ENCODE measurements at regions of chr16 and their contacts with region 1.

Region 1: DNA sequence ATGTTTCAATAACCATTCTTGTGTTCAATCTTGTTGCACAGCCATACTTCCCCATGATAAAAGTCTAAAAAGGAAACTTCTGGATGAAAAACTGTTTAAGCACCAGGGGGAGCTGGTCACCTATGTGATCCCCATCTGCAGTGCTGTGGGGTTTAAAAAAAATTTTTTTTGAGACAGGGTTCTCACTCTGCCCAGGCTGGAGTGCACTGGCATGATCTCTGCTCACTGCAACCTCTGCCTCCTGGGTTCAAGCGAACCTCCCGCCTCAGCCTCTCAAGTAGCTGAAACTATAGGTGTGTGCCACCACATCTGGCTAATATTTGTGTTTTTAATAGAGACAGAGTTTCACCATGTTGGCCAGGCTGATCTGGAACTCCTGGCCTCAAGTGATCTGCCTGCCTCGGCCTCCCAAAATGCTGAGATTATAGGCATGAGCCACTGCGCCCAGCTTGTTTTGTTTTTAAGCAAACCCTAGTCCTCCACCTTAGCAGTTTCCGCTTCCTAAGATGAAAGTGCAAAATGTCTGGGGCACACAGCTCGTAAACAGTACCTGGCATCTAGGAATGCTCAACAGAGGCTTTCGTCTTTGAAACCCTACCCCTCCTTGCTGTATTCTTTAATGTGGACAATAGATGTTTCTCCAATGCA is 25.4 kb downstream of the DNAJA2 start:
- DNase-seq: no peak
- ATAC-seq: peak; percentile 74
- H3K4me3 Mint-ChIP-seq: no peak overlapping the region
- H3K27ac Mint-ChIP-seq: no peak overlapping the region
- H3K4me1 Mint-ChIP-seq: peaks cover 7% of the 10 kb centered on the region
- H3K27me3 Mint-ChIP-seq: no peaks in the 10 kb centered on the region
- CTCF ChIP-seq: no peak

Region 2: GRCh38 chr16:48054881-48055601 is 1107.0 kb after region 1 on chr16:
- CTCF ChIA-PET with region 1: interaction called, 4 read pairs
- POLR2A ChIA-PET with region 1: no interaction called
- intact Hi-C with region 1: loop called (anchors 2 kb)
- DNase-seq: no peak
- ATAC-seq: no peak
- H3K4me3 Mint-ChIP-seq: no peak overlapping the region
- H3K27ac Mint-ChIP-seq: no peak overlapping the region
- H3K4me1 Mint-ChIP-seq: peaks cover 4% of the 10 kb centered on the region
- H3K27me3 Mint-ChIP-seq: peaks cover 19% of the 10 kb centered on the region
- CTCF ChIP-seq: no peak